GM10248 (cell line): ENCODE measurements at regions of chr3 and their contacts with region 1.

Region 1: DNA sequence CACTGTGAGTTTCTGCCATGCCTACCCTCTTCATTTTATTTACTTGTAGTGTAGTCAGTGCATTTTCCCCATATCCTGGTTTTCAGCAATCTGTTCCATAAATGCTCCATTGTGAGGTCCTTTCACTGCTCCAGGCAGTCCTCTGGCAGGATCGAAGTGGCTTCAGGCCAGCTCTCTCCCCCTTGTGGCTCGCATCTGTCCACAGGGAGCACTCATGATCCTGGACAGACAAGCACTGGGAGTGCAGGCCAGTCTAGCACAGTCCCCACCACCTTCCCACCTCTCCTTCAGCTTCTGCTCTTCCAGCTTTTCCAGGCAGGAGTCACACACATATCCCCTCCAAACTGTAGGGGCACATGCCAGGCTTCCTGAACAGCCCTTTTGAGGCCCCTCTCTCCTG is 173.6 kb downstream of the PPM1L start:
- DNase-seq: no peak
- CTCF ChIP-seq: no peak

Region 2: DNA sequence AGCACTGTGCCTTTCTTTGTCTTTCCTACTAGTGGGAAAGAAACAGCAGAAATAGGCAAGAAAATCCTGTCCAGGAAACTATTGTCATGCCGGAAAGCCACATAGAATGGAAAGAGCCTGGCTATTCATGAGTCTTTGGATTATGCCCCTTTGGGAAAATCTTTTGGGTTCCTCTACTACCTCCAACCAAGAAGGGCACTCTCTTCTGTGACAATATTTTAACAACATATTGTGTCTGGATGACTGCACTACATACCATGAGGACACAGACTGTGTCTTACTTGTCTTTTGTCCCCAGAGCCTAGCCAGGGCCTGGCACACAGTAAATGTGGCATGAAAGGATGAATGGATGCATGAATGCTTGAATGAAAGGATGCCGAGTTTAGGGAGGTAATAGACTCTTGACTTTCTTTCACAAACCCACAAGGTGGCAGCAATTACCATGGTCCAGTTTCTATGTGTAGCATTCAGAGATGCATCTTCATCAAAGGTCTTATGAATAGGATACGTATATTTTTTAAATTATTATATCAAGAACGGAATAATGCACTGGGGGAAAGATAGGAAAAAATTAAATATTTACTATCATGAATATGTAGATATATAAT is 222.3 kb before region 1 on chr3:
- CTCF ChIA-PET with region 1: interaction called, 18 read pairs
- POLR2A ChIA-PET with region 1: no interaction called
- DNase-seq: peak; percentile 21
- CTCF ChIP-seq: peak; percentile 46

Region 3: DNA sequence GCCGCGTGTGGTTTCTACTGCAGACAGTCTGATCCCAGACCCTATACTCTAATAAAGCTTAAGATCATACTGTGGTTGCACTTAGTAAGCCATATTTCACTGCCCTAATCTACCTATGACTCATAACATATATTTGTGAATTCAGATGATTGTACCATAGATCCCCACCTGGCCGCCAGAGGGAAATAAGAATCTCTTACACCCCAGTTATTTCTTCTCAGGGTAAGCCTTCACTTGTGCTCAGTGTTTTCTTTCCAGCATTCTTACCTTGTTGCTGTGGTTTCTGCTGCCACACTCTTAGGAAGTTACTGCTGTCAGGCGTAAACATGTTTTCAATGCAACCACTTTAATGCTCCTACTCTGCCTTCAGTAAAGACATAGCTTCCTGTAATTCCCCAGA is 69.7 kb after region 1 on chr3:
- CTCF ChIA-PET with region 1: no interaction called
- POLR2A ChIA-PET with region 1: no interaction called
- DNase-seq: no peak
- CTCF ChIP-seq: no peak